ENCODE measurements at regions of chr6 and their contacts with region 1.

Region 1: GRCh38 chr6:41920921-41921711 is at the starts of genes BYSL and MED20:
- DNase-seq: peak; percentile 94
- ATAC-seq: peak; percentile 80
- H3K4me3 ChIP-seq: peak within 1 kb of the TSS; percentile 99
- H3K27ac ChIP-seq: peak within 1 kb of the TSS; percentile 89
- H3K4me1 ChIP-seq: peaks cover 37% of the 10 kb centered on the region
- H3K27me3 ChIP-seq: no peaks in the 10 kb centered on the region
- CTCF ChIP-seq: peak; percentile 96
- total RNA-seq, gene BYSL: 46.5 and 84.1 TPM in 2 replicates
- total RNA-seq, gene MED20: 27.5 and 28.5 TPM in 2 replicates

Region 2: GRCh38 chr6:41239467-41240159 is 681.5 kb before region 1 on chr6:
- CTCF ChIA-PET with region 1: no interaction called
- POLR2A ChIA-PET with region 1: no interaction called
- intact Hi-C with region 1: no loop called
- DNase-seq: no peak
- ATAC-seq: no peak
- H3K4me3 ChIP-seq: no peak overlapping the region
- H3K27ac ChIP-seq: no peak overlapping the region
- H3K4me1 ChIP-seq: no peaks in the 10 kb centered on the region
- H3K27me3 ChIP-seq: peaks cover 82% of the 10 kb centered on the region
- CTCF ChIP-seq: no peak

Region 3: GRCh38 chr6:41581381-41581991 is 339.6 kb before region 1 on chr6:
- CTCF ChIA-PET with region 1: no interaction called
- POLR2A ChIA-PET with region 1: no interaction called
- intact Hi-C with region 1: no loop called
- DNase-seq: peak; percentile 84
- ATAC-seq: peak; percentile 67
- H3K4me3 ChIP-seq: no peak overlapping the region
- H3K27ac ChIP-seq: peak overlapping the region; percentile 30; the same call in 1 of the 2 replicates
- H3K4me1 ChIP-seq: peaks cover 44% of the 10 kb centered on the region
- H3K27me3 ChIP-seq: no peaks in the 10 kb centered on the region
- CTCF ChIP-seq: no peak

Region 4: DNA sequence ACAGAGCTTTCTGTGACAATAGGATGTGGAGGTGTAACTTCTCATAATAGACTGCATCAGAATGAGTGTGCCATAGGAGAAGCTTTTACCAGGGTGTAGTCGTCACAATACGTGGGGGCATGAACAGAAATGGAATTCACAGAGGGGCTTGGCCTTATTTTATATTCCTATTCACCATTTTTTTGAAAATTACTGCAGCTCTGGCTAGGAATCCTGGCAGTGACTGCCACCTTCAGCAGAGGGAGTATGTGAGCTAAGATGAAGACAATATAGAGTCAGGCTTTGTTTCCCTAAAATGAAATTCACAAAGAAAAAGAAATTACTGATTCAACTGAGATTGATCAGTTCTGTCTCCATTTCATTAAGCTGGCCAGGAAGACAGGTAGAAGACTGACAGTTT is 119.7 kb before region 1 on chr6:
- CTCF ChIA-PET with region 1: no interaction called
- POLR2A ChIA-PET with region 1: no interaction called
- intact Hi-C with region 1: loop called (anchors 5 kb)
- DNase-seq: peak; percentile 55
- ATAC-seq: peak; percentile 73
- H3K4me3 ChIP-seq: no peak overlapping the region
- H3K27ac ChIP-seq: no peak overlapping the region
- H3K4me1 ChIP-seq: no peaks in the 10 kb centered on the region
- H3K27me3 ChIP-seq: no peaks in the 10 kb centered on the region
- CTCF ChIP-seq: peak; percentile 80

Region 5: GRCh38 chr6:41878246-41878645 is 42.9 kb before region 1 on chr6:
- CTCF ChIA-PET with region 1: no interaction called
- POLR2A ChIA-PET with region 1: no interaction called
- intact Hi-C with region 1: no loop called
- DNase-seq: peak; percentile 59
- ATAC-seq: peak; percentile 68
- H3K4me3 ChIP-seq: no peak overlapping the region; the same call in 1 of the 2 replicates
- H3K27ac ChIP-seq: no peak overlapping the region
- H3K4me1 ChIP-seq: peaks cover 18% of the 10 kb centered on the region
- H3K27me3 ChIP-seq: no peaks in the 10 kb centered on the region
- CTCF ChIP-seq: no peak

Region 6: GRCh38 chr6:41895300-41896233 is 25.5 kb before region 1 on chr6 and contains the start of gene USP49:
- CTCF ChIA-PET with region 1: interaction called, 9 read pairs
- POLR2A ChIA-PET with region 1: interaction called, 3 read pairs
- intact Hi-C with region 1: loop called (anchors 1 kb)
- DNase-seq: peak; percentile 82
- ATAC-seq: peak; percentile 92
- H3K4me3 ChIP-seq: peak within 1 kb of the TSS; percentile 85
- H3K27ac ChIP-seq: peak within 1 kb of the TSS; percentile 67
- H3K4me1 ChIP-seq: peaks cover 16% of the 10 kb centered on the region
- H3K27me3 ChIP-seq: no peaks in the 10 kb centered on the region
- CTCF ChIP-seq: no peak
- total RNA-seq, gene USP49: 2.3 and 5.7 TPM in 2 replicates

Region 7: GRCh38 chr6:42402184-42402583 is 481.1 kb after region 1 on chr6:
- CTCF ChIA-PET with region 1: no interaction called
- POLR2A ChIA-PET with region 1: no interaction called
- intact Hi-C with region 1: no loop called
- DNase-seq: peak; percentile 46
- ATAC-seq: no peak; the same call in 1 of the 2 replicates
- H3K4me3 ChIP-seq: no peak overlapping the region
- H3K27ac ChIP-seq: no peak overlapping the region
- H3K4me1 ChIP-seq: peaks cover 47% of the 10 kb centered on the region
- H3K27me3 ChIP-seq: no peaks in the 10 kb centered on the region
- CTCF ChIP-seq: no peak

Measured in PC-3 (cell line).